CD14-positive monocyte (primary cell): ENCODE measurements at regions of chr17 and their contacts with region 1.

Region 1: GRCh38 chr17:7561028-7561575 is 617 bp upstream of the SENP3 start:
- DNase-seq: peak; percentile 74 to 84 (median 83)
- H3K4me3 ChIP-seq: peak overlapping the region; percentile 69 to 100 (median 91)
- H3K4me3 Mint-ChIP-seq: peak overlapping the region; percentile 97 to 98
- H3K27ac ChIP-seq: peak overlapping the region; percentile 84 to 90
- H3K27ac Mint-ChIP-seq: peak overlapping the region; percentile 93 to 98 (median 96)
- H3K4me1 ChIP-seq: peaks cover 54 to 63% of the 10 kb centered on the region in 2 donors
- H3K4me1 Mint-ChIP-seq: peaks cover 54% of the 10 kb centered on the region
- H3K27me3 ChIP-seq: no peaks in the 10 kb centered on the region
- H3K27me3 Mint-ChIP-seq: peaks cover 0 to 6% (median 4%) of the 10 kb centered on the region in 3 donors
- CTCF ChIP-seq: peak; percentile 90

Region 2: DNA sequence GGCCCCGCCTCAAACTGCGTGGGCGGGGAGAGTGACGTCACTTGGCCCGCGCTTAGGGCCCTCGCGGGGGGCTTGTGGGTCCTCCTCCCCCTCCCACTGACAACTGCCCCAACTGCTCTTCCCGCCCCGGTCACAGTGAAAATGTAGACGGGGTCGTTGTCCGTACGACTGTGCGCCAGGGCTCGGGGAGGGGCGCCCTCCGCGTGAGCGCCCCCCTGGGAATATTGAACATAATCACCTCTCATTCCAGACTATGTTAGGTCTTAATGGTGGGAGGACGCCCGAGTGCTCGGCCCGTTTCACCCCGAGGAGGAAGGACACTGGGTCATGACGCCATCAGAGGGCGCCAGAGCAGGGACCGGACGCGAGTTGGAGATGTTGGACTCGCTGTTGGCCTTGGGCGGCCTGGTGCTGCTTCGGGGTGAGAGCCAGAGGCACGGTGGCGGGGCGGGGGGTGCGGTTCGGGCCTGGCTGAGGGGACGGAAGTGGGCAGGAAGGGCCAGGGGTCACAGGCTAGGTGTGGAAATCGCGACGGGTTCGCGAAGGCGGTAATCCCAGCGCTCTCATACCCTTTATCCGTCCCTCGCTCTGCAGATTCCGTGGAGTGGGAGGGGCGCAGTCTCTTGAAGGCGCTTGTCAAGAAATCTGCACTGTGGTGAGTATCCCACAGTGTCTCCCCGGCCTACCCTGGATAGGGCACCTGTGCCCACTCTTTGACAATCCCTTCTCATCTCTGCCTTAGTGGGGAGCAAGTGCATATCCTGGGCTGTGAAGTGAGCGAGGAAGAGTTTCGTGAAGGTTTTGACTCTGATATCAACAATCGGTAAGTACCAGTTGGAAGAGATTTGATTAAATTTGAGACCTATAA is 308.7 kb before region 1 on chr17 and contains the start of gene ELP5:
- intact Hi-C with region 1: loop called in 1 of 2 experiments (anchors 10 kb)
- DNase-seq: peak; percentile 88 to 96 (median 93)
- H3K4me3 ChIP-seq: peak within 1 kb of the TSS; percentile 73 to 93 (median 87)
- H3K4me3 Mint-ChIP-seq: peak within 1 kb of the TSS; percentile 90 to 95
- H3K27ac ChIP-seq: peak within 1 kb of the TSS; percentile 100
- H3K27ac Mint-ChIP-seq: peak within 1 kb of the TSS; percentile 99 to 100 (median 100)
- H3K4me1 ChIP-seq: peaks cover 31 to 36% of the 10 kb centered on the region in 2 donors
- H3K4me1 Mint-ChIP-seq: peaks cover 34% of the 10 kb centered on the region
- H3K27me3 ChIP-seq: no peaks in the 10 kb centered on the region
- H3K27me3 Mint-ChIP-seq: no peaks in the 10 kb centered on the region
- CTCF ChIP-seq: peak; percentile 28
- polyA plus RNA-seq, gene ELP5: 36.1 to 49.5 (median 44.1) TPM

Region 3: DNA sequence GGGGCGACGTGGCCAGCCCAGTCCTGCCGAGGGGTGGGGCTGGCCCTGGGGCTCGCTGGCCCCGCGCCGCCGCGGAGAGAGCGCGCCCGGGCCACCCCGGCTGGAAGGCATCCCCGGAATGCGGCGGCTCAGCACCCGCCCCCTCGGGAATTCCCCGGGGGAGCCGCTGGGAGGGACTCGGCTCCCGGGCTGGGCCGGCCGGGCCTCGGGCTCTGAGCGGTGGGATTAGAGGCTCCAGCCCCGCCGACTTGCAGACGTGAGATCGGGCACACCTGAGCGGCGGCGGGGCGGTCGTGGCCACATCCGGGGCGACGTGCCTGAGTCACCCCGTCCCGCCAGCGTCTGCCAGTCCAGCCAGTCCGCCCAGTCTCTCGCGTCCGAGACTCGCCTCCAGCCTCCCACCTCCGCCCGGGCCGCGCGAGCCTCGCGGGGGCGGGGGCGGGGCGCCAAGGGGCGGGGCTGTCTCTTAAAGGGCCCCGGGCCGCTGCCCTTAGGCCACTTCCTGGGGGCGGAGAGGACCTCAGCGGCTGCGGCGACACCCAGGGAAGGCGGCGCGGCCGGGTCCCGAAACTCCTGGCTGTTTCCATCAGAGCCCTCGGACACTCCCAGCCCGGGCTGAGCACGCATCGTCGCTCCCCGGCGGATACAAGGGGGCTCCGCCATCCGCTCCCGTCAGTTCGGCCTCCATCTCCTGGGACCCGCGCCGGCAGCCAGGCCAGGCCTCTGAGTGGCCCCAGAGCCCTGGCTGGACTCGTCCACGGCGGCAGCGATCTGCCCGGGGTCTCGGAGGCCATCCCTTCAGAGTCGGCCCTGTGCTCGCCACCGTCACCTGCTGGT is 209.2 kb before region 1 on chr17 and contains the start of gene KCTD11:
- intact Hi-C with region 1: loop called in 1 of 2 experiments (anchors 10 kb)
- DNase-seq: peak; percentile 66 to 76 (median 74)
- H3K4me3 ChIP-seq: peak within 1 kb of the TSS; percentile 76 to 90 (median 88)
- H3K4me3 Mint-ChIP-seq: peak within 1 kb of the TSS; percentile 89 to 94
- H3K27ac ChIP-seq: peak within 1 kb of the TSS; percentile 55 to 81
- H3K27ac Mint-ChIP-seq: peak within 1 kb of the TSS; percentile 70 to 90 (median 87)
- H3K4me1 ChIP-seq: peaks cover 28 to 54% of the 10 kb centered on the region in 2 donors
- H3K4me1 Mint-ChIP-seq: peaks cover 40% of the 10 kb centered on the region
- H3K27me3 ChIP-seq: no peaks in the 10 kb centered on the region
- H3K27me3 Mint-ChIP-seq: peaks cover 3 to 5% (median 3%) of the 10 kb centered on the region in 3 donors
- CTCF ChIP-seq: peak; percentile 26
- polyA plus RNA-seq, gene KCTD11: 3.4 to 5.6 (median 3.6) TPM

Region 4: DNA sequence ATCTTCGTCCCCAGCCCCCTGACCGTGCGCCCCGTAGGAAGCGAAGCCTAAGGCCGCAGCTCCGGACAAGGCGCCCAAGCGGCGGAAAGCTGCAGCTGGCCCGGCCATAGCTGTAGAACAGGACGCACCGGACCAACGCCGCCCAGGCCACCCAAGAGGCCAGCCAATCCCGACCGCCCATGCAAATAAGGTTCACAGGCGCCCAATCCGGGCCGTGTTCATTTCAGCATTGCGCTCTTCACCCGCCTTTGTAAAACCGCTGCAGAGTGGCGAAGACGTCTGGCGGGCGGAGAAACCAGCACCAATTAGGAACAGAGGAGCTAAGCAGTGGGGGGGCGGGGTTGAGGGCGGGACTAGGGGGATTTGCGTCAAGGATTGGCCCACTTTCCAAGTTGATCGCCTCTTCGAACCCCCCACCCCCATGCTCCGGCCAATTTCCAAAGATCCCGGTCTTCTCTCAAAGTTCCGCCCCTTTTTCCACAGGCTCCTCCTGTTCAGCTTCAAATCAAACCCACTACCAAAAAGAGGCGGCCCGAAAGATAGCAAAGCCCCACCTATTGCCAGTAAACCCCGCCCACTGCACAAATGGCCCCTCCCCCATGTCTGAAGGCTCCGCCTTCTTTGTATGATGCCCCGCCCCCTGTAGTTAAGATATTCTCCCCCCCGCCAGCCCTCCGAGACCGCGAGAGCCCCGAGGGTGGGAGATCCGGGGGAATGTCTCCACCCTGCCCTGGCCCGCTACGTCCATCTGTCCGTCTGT is 156.9 kb before region 1 on chr17 and contains the start of gene TMEM256:
- intact Hi-C with region 1: loop called in 1 of 2 experiments (anchors 5 kb)
- DNase-seq: peak; percentile 98
- H3K4me3 ChIP-seq: peak within 1 kb of the TSS; percentile 57 to 86 (median 62)
- H3K4me3 Mint-ChIP-seq: peak within 1 kb of the TSS; percentile 86 to 95
- H3K27ac ChIP-seq: peak within 1 kb of the TSS; percentile 59 to 70
- H3K27ac Mint-ChIP-seq: peak within 1 kb of the TSS; percentile 88 to 99 (median 97)
- H3K4me1 ChIP-seq: peaks cover 13 to 24% of the 10 kb centered on the region in 2 donors
- H3K4me1 Mint-ChIP-seq: peaks cover 21% of the 10 kb centered on the region
- H3K27me3 ChIP-seq: peaks cover 4 to 33% of the 10 kb centered on the region in 2 donors
- H3K27me3 Mint-ChIP-seq: peaks cover 33 to 41% (median 34%) of the 10 kb centered on the region in 3 donors
- CTCF ChIP-seq: no peak
- polyA plus RNA-seq, gene TMEM256: 39.2 to 81.4 (median 72.6) TPM

Region 5: GRCh38 chr17:7435221-7435675 is 125.9 kb before region 1 on chr17 and contains the start of gene TMEM102:
- intact Hi-C with region 1: loop called (anchors 5 to 10 kb)
- DNase-seq: peak; percentile 97 to 98 (median 98)
- H3K4me3 ChIP-seq: peak within 1 kb of the TSS; percentile 77 to 95 (median 86)
- H3K4me3 Mint-ChIP-seq: peak within 1 kb of the TSS; percentile 86 to 94
- H3K27ac ChIP-seq: peak within 1 kb of the TSS; percentile 79 to 89
- H3K27ac Mint-ChIP-seq: peak within 1 kb of the TSS; percentile 90 to 97 (median 94)
- H3K4me1 ChIP-seq: peaks cover 46 to 50% of the 10 kb centered on the region in 2 donors
- H3K4me1 Mint-ChIP-seq: peaks cover 43% of the 10 kb centered on the region
- H3K27me3 ChIP-seq: peaks cover 14 to 18% of the 10 kb centered on the region in 2 donors
- H3K27me3 Mint-ChIP-seq: peaks cover 22 to 31% (median 24%) of the 10 kb centered on the region in 3 donors
- CTCF ChIP-seq: no peak
- polyA plus RNA-seq, gene TMEM102: 5.1 to 11.3 (median 9.8) TPM

Region 6: GRCh38 chr17:7515911-7516610 is 45.0 kb before region 1 on chr17:
- intact Hi-C with region 1: loop called (anchors 1 to 2 kb)
- DNase-seq: peak; percentile 24 to 67 (median 60)
- H3K4me3 ChIP-seq: peak overlapping the region in 1 of 3 experiments; percentile 17
- H3K4me3 Mint-ChIP-seq: peak overlapping the region in 1 of 2 donors; percentile 39
- H3K27ac ChIP-seq: peak overlapping the region; percentile 41 to 62
- H3K27ac Mint-ChIP-seq: peak overlapping the region; percentile 52 to 88 (median 80)
- H3K4me1 ChIP-seq: peaks cover 16 to 21% of the 10 kb centered on the region in 2 donors
- H3K4me1 Mint-ChIP-seq: peaks cover 23% of the 10 kb centered on the region
- H3K27me3 ChIP-seq: no peaks in the 10 kb centered on the region
- H3K27me3 Mint-ChIP-seq: peaks cover 0 to 2% (median 0%) of the 10 kb centered on the region in 3 donors
- CTCF ChIP-seq: no peak

Region 7: DNA sequence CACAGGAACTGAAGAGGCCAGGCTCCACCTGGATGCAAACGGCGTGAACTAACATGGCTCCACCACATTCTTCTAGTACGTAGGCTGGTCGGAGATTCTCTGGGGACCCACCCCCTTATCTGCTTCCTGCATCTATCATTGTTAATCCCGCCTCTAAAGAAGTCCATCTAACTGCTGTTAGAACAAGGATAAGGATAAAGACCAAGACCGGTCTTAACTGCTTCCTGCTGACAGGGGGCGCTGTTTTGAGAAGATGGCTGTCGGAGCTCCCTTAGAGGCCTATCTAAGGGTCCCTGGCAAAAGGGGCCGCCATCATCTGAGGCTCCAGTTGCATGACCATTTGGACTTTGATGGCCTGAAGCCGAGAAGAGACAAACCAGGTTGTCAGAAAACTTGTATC is 38.1 kb before region 1 on chr17:
- intact Hi-C with region 1: loop called (anchors 2 kb)
- DNase-seq: peak; percentile 29 to 52 (median 50)
- H3K4me3 ChIP-seq: no peak overlapping the region
- H3K4me3 Mint-ChIP-seq: no peak overlapping the region
- H3K27ac ChIP-seq: no peak overlapping the region
- H3K27ac Mint-ChIP-seq: no peak overlapping the region
- H3K4me1 ChIP-seq: no peaks in the 10 kb centered on the region
- H3K4me1 Mint-ChIP-seq: peaks cover 4% of the 10 kb centered on the region
- H3K27me3 ChIP-seq: no peaks in the 10 kb centered on the region
- H3K27me3 Mint-ChIP-seq: peaks cover 0 to 4% (median 4%) of the 10 kb centered on the region in 3 donors
- CTCF ChIP-seq: peak; percentile 75

Region 8: GRCh38 chr17:7745748-7746470 is 184.8 kb after region 1 on chr17:
- intact Hi-C with region 1: no loop called
- DNase-seq: peak; percentile 30 to 72 (median 46)
- H3K4me3 ChIP-seq: no peak overlapping the region
- H3K4me3 Mint-ChIP-seq: no peak overlapping the region
- H3K27ac ChIP-seq: no peak overlapping the region
- H3K27ac Mint-ChIP-seq: peak overlapping the region in 1 of 7 donors; percentile 42
- H3K4me1 ChIP-seq: peaks cover 0 to 8% of the 10 kb centered on the region in 2 donors
- H3K4me1 Mint-ChIP-seq: peaks cover 11% of the 10 kb centered on the region
- H3K27me3 ChIP-seq: no peaks in the 10 kb centered on the region
- H3K27me3 Mint-ChIP-seq: peaks cover 2 to 4% (median 2%) of the 10 kb centered on the region in 3 donors
- CTCF ChIP-seq: no peak